Caco-2 (cell line): ENCODE measurements at regions of chr4 and their contacts with region 1.

Region 1: GRCh38 chr4:105586638-105587328 is 34.4 kb downstream of the ARHGEF38 start:
- DNase-seq: no peak
- H3K4me3 ChIP-seq: no peak overlapping the region
- H3K4me3 Mint-ChIP-seq: peak overlapping the region; percentile 64
- H3K27ac Mint-ChIP-seq: peak overlapping the region; percentile 82
- H3K4me1 ChIP-seq: peaks cover 31% of the 10 kb centered on the region
- H3K4me1 Mint-ChIP-seq: peaks cover 46% of the 10 kb centered on the region
- H3K27me3 ChIP-seq: no peaks in the 10 kb centered on the region
- H3K27me3 Mint-ChIP-seq: no peaks in the 10 kb centered on the region
- CTCF ChIP-seq: no peak

Region 2: DNA sequence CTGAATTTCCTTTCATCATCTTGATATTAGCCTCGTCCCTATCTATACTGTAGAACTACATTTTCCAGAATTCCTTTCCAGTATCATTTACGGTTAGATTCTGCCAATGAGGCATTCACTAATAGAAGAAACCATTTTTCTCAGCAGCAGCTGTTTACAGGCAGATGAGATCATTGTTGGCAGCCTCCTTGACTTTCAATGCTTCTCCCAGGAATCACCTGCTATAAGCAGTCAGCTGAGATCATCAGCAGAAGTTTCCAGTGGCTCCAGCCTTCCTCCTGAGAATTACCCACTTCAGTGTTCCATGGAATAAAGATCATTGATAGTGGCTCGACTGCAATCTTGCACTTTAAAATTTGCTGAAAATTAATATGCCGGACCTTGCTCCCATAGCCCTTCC is 597.4 kb before region 1 on chr4:
- CTCF ChIA-PET with region 1: no interaction called
- POLR2A ChIA-PET with region 1: no interaction called
- intact Hi-C with region 1: no loop called
- DNase-seq: no peak
- H3K4me3 ChIP-seq: no peak overlapping the region
- H3K4me3 Mint-ChIP-seq: no peak overlapping the region
- H3K27ac Mint-ChIP-seq: no peak overlapping the region
- H3K4me1 ChIP-seq: no peaks in the 10 kb centered on the region
- H3K4me1 Mint-ChIP-seq: no peaks in the 10 kb centered on the region
- H3K27me3 ChIP-seq: no peaks in the 10 kb centered on the region
- H3K27me3 Mint-ChIP-seq: peaks cover 4% of the 10 kb centered on the region
- CTCF ChIP-seq: no peak

Region 3: DNA sequence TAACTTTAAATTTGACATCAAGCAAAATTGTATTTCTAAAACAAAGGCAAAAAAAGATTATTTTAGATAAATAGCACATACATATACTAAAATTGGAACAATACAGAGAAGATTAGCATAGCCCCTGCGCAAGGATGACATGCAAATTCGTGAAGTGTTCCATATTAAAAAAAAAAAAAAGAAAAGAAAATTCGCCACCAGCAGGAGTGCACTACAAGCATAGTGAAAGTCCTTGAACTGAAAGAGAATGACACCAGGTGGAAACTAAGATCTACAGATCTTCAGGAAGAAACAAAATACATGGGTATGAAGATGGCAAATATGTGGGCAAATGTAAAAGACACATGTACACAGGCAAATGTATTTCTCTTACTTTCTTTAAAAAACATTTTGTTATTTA is 179.9 kb before region 1 on chr4:
- CTCF ChIA-PET with region 1: no interaction called
- POLR2A ChIA-PET with region 1: no interaction called
- intact Hi-C with region 1: no loop called
- DNase-seq: no peak
- H3K4me3 ChIP-seq: no peak overlapping the region
- H3K4me3 Mint-ChIP-seq: no peak overlapping the region
- H3K27ac Mint-ChIP-seq: no peak overlapping the region
- H3K4me1 ChIP-seq: no peaks in the 10 kb centered on the region
- H3K4me1 Mint-ChIP-seq: no peaks in the 10 kb centered on the region
- H3K27me3 ChIP-seq: no peaks in the 10 kb centered on the region
- H3K27me3 Mint-ChIP-seq: no peaks in the 10 kb centered on the region
- CTCF ChIP-seq: no peak

Region 4: GRCh38 chr4:105520817-105521790 is 65.7 kb before region 1 on chr4:
- CTCF ChIA-PET with region 1: no interaction called
- POLR2A ChIA-PET with region 1: no interaction called
- intact Hi-C with region 1: loop called (anchors 5 kb)
- DNase-seq: peak in 1 of 2 experiments; percentile 61
- H3K4me3 ChIP-seq: no peak overlapping the region
- H3K4me3 Mint-ChIP-seq: no peak overlapping the region
- H3K27ac Mint-ChIP-seq: no peak overlapping the region
- H3K4me1 ChIP-seq: no peaks in the 10 kb centered on the region
- H3K4me1 Mint-ChIP-seq: no peaks in the 10 kb centered on the region
- H3K27me3 ChIP-seq: no peaks in the 10 kb centered on the region
- H3K27me3 Mint-ChIP-seq: no peaks in the 10 kb centered on the region
- CTCF ChIP-seq: peak; percentile 56 to 69

Region 5: DNA sequence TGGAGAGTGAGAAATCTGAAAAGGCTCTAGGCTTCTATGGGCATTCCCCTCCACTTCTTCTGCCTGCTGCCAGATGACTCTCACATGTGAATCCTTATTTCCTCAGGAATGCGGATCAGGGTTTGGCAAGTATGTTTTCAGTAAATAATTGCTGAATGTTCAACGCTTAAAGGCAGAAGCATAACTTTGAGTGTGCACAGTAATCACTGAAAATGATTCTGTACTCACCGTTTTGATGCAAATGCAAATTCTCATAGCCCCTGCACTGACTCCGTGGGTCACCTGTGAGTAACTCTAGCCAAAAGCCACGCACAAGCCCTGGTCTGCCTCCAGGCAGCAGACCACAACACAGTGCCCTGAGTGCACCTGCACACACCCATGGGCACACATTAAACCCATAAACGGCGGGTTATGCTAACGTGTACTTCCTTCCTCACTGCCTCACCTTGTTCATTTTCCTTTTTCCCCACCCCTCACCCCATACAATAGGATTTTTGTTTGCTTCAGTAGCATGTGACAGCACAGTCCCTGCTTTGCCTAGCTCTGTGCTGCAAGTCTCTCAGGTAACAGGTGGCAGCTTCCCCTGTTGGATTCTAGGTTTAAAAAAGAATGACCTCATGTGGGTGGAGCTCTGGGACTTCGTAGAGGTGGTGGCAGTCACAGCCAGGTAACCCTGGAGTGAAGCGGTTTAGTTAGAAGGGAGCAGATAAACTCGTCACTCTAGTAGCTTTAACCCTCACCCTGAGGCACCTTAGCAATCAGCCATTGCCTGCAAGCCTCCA is 34.6 kb before region 1 on chr4 and contains the start of gene ARHGEF38:
- CTCF ChIA-PET with region 1: no interaction called
- POLR2A ChIA-PET with region 1: interaction called, 5 read pairs
- intact Hi-C with region 1: loop called (anchors 1 kb)
- DNase-seq: peak; percentile 47 to 58
- H3K4me3 ChIP-seq: peak within 1 kb of the TSS; percentile 20
- H3K4me3 Mint-ChIP-seq: peak within 1 kb of the TSS; percentile 77
- H3K27ac Mint-ChIP-seq: peak within 1 kb of the TSS; percentile 85
- H3K4me1 ChIP-seq: peaks cover 41% of the 10 kb centered on the region
- H3K4me1 Mint-ChIP-seq: peaks cover 36% of the 10 kb centered on the region
- H3K27me3 ChIP-seq: no peaks in the 10 kb centered on the region
- H3K27me3 Mint-ChIP-seq: no peaks in the 10 kb centered on the region
- CTCF ChIP-seq: no peak
- total RNA-seq, gene ARHGEF38: 3.5 TPM in 2 replicates